ENCODE measurements at regions of chr6 and their contacts with region 1.

Region 1: DNA sequence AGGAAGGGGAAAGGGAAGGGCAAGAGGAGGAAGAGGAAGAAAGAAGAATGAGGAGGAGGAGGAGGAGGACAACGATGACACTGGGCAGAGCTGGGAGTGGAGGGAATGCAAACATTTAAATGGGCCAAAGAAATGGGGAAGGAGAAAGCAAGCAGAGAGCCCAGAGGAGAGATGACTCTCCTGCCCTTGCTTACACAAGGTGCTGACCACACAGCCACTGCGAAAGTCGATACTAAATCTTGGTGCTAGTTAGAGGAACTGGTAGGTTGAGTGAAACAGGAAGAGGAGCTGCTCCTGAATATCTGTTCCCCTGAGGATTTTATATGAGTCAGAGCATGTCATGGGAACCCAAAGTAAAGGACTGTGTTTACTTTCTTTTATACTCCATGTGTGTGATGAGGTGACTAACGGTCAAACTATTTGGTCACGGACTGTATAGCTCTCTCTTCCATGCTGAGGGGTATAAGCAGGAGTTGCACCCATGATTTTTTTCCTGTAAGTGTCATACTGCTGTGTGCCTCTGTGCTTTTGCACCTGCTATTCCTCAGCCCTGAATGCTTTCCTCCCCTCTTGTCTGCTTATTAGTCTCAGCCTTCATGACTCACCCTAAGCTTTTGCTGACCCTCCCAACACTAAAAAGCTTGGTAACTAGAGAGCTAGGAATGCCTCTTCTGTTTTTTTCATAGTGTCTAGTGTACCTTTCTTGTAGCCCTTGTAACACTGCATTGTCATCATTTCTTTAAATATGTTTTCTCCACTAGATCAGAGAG is 9.5 kb upstream of the PAQR8 start:
- DNase-seq: peak in 1 of 3 donors; percentile 56
- ATAC-seq: peak; percentile 68 to 74
- H3K4me3 ChIP-seq: no peak overlapping the region
- H3K27ac ChIP-seq: no peak overlapping the region
- H3K4me1 ChIP-seq: no peaks in the 10 kb centered on the region
- H3K27me3 ChIP-seq: no peaks in the 10 kb centered on the region

Region 2: DNA sequence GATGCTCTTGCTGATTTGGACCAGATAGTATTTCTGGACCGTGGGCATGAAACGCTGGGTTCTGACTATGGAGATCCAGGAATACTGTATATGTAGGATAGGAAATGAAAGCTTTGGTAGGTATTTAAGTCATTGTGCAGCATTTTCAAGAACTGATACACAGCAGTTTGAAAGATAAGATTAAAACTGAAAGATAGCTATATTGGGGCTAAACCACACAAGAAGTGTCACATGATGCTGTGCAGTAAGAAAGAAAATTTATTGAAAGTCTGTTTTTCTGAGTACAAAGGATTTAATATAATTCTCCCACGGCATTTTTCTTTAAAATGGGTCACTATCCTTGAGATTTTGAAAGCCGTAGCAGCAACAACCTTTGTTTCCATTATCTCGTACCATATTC is 165.9 kb before region 1 on chr6:
- intact Hi-C with region 1: no loop called
- DNase-seq: no peak
- ATAC-seq: no peak
- H3K4me3 ChIP-seq: no peak overlapping the region
- H3K27ac ChIP-seq: no peak overlapping the region
- H3K4me1 ChIP-seq: no peaks in the 10 kb centered on the region
- H3K27me3 ChIP-seq: no peaks in the 10 kb centered on the region

Region 3: DNA sequence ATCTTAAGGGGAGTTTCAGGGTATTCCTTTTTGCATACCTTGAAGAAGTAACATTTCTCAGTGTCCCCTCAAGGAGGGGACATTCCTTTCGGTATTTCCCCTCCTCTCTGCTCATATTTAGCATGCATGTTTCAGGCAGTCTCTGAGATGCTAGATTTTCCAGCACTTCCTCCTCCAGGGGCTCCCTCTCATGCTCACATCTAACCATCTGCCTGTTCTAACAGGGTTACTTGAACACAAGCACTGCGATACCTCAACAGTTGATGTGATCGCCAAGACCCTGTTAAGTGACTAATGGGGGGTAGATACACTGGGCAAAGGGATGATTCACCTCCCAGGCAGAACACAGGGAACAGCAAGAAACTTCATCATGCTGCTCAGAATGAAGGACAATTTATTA is 55.0 kb before region 1 on chr6:
- intact Hi-C with region 1: loop called in 1 of 4 experiments (anchors 10 kb)
- DNase-seq: no peak
- ATAC-seq: no peak
- H3K4me3 ChIP-seq: no peak overlapping the region
- H3K27ac ChIP-seq: no peak overlapping the region
- H3K4me1 ChIP-seq: no peaks in the 10 kb centered on the region
- H3K27me3 ChIP-seq: no peaks in the 10 kb centered on the region

Region 4: GRCh38 chr6:53151676-53152075 is 799.3 kb after region 1 on chr6:
- intact Hi-C with region 1: no loop called
- DNase-seq: no peak
- ATAC-seq: no peak
- H3K4me3 ChIP-seq: no peak overlapping the region
- H3K27ac ChIP-seq: no peak overlapping the region
- H3K4me1 ChIP-seq: no peaks in the 10 kb centered on the region
- H3K27me3 ChIP-seq: no peaks in the 10 kb centered on the region